ENCODE measurements at regions of chr22 and their contacts with region 1.

Region 1: DNA sequence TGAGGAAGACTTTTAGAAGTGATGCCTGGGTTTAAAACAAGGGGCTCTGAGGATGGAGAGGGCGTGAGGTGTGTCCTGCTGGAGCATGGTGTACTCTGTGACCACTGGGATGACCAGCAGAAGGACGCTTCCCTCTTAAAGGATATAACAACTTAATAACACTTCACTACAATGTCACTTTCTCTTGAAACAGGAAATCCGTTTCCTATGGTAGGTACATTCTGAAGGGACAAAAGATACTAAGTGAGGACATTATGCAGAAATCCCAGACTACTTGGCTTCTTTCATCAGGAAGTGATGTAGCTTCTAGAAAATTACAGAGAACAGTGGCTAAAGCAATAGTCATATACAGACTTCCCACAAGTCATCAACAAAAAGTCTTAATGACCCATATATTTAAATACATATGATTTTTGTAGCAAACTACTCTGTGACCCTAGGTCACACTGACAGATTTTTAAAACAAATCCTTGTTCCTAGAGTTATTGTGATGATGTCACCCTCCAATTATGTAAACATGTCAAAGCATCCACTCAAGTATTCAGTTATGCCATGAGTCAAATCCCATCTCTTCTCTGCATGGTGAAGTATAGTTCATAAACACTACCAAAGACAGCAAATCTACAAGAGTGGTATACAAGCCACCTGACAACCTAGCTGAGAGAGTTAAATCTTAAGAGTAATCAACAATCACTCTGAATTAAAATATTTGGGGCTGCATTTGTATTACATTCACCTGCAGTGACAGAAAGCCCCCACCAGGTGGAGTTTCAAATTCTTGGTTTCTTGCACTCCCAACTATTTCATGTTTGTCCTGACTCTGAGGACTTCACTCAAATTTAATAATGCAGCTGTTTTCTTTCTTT is 32.8 kb downstream of the PITPNB start:
- DNase-seq: peak; percentile 55
- ATAC-seq: peak; percentile 42
- H3K4me3 Mint-ChIP-seq: no peak overlapping the region
- H3K27ac Mint-ChIP-seq: no peak overlapping the region
- H3K4me1 Mint-ChIP-seq: peaks cover 4% of the 10 kb centered on the region
- H3K27me3 Mint-ChIP-seq: no peaks in the 10 kb centered on the region

Region 2: DNA sequence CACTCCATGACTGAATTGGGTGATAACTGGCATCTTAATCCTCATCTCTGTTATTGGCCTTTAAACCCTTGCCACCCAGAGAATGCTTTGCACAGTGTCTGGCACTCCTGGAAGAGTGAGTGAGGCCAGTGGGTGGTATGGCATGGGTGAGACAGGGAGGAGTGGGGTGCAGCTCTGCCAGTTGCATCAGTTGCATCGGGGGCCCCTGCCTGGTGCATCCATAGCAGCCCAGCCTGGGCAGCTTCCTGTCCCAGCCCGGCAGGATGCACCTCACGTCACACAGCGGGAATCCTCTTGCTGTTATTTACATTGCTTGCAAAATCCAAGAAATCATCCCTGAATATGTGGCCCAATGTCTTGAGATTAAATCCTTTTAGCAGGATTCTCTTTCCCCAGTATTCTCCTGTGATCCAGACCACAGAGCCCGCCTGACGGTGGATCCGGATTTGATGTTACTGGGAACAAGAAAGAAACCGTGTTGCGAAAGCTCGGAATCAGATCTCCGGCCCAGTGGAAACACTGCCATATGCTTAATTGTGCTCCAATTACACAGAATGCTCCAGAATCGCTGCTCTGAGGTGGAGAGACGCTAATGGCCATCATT is 47.1 kb before region 1 on chr22:
- CTCF ChIA-PET with region 1: no interaction called
- DNase-seq: no peak
- ATAC-seq: no peak
- H3K4me3 Mint-ChIP-seq: no peak overlapping the region
- H3K27ac Mint-ChIP-seq: no peak overlapping the region
- H3K4me1 Mint-ChIP-seq: no peaks in the 10 kb centered on the region
- H3K27me3 Mint-ChIP-seq: no peaks in the 10 kb centered on the region

Region 3: DNA sequence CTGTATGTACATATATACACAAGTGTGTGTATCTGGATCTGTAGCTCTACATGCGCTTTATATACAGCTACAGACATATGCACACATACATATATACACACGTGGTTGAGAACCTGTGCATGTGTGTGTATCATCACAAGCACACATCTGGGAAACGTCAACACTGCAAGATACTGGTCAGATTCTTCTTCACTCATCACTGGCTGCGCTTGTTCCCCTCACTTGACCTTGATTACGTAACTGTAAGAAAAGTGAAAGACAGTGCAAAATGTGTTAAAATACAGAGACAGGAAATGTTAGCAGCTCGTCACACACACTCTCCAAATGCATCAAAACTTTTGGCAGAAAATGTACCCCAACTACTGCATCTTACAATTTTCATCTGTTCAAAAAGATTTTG is 32.8 kb before region 1 on chr22:
- CTCF ChIA-PET with region 1: no interaction called
- DNase-seq: no peak
- ATAC-seq: no peak
- H3K4me3 Mint-ChIP-seq: no peak overlapping the region
- H3K27ac Mint-ChIP-seq: no peak overlapping the region
- H3K4me1 Mint-ChIP-seq: peaks cover 16% of the 10 kb centered on the region
- H3K27me3 Mint-ChIP-seq: no peaks in the 10 kb centered on the region

Region 4: GRCh38 chr22:28009272-28009827 is 123.1 kb after region 1 on chr22:
- CTCF ChIA-PET with region 1: interaction called, 21 read pairs
- DNase-seq: peak; percentile 79
- ATAC-seq: peak; percentile 85
- H3K4me3 Mint-ChIP-seq: no peak overlapping the region
- H3K27ac Mint-ChIP-seq: no peak overlapping the region
- H3K4me1 Mint-ChIP-seq: no peaks in the 10 kb centered on the region
- H3K27me3 Mint-ChIP-seq: no peaks in the 10 kb centered on the region